Testis (tissue), 5 donors: ENCODE measurements at regions of chr2 and their contacts with region 1.

Region 1: GRCh38 chr2:85888684-85889626 is at the start of gene ST3GAL5:
- DNase-seq: peak; percentile 95
- H3K4me3 ChIP-seq: peak within 1 kb of the TSS; percentile 73 to 93
- H3K27ac ChIP-seq: peak within 1 kb of the TSS; percentile 53 to 92
- H3K4me1 ChIP-seq: peaks cover 31% of the 10 kb centered on the region
- H3K27me3 ChIP-seq: no peaks in the 10 kb centered on the region
- CTCF ChIP-seq: peak; percentile 65 to 84 (median 65)
- POLR2A ChIP-seq: no peak
- total RNA-seq, gene ST3GAL5: 38.3 to 60.0 TPM

Region 2: GRCh38 chr2:85741833-85742455 is 147.0 kb before region 1 on chr2:
- intact Hi-C with region 1: no loop called
- DNase-seq: no peak
- H3K4me3 ChIP-seq: no peak overlapping the region
- H3K27ac ChIP-seq: peak overlapping the region; percentile 34 to 70
- H3K4me1 ChIP-seq: peaks cover 45% of the 10 kb centered on the region
- H3K27me3 ChIP-seq: no peaks in the 10 kb centered on the region
- CTCF ChIP-seq: no peak
- POLR2A ChIP-seq: no peak

Region 3: GRCh38 chr2:85999061-85999831 is 110.3 kb after region 1 on chr2:
- intact Hi-C with region 1: loop called (anchors 5 kb)
- DNase-seq: no peak
- H3K4me3 ChIP-seq: no peak overlapping the region
- H3K27ac ChIP-seq: peak overlapping the region; percentile 60 to 89
- H3K4me1 ChIP-seq: peaks cover 40% of the 10 kb centered on the region
- H3K27me3 ChIP-seq: no peaks in the 10 kb centered on the region
- CTCF ChIP-seq: no peak
- POLR2A ChIP-seq: no peak

Region 4: DNA sequence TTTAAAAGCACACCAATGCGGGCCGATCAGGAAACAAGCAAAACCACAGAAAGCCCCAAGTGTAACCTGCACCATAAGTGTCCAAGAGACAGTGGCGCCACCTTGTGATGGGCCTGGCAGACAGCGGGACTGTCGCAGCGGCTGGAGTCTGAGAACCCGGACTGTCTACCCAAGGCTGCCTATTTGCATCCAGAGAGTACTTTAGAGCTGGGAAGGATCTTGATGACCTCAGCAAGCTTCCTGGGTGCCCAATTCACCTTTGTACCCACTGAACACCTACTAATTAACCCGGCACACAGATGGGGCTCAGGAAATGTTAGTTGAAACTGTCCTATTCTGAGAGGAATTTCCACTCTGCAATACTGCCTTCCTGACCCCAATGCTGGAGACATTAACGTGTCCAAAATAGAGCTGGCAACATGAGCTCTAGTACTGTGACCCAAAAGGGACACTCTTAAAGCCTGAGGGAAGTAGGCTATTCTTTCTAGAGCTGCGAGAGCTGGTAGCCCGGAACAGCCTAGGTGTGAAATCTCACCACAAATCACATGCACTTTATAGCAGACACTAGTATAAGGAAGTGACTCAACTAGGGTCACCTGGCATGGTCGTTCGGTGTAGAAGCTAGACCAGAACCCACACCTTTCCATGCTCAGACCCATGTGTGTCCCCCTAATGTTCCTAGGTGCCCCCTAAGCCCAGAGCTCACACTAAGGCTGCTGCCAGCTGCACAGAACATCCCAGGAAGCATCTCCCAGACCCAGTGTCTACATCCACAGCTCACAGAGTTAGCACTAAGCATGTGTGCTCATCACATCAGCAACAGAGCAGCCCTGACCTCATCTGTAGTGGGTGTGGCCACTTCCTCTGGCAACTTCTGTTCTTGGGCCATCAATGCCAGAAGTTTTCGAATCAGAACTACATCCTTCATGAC is 191.3 kb after region 1 on chr2:
- intact Hi-C with region 1: loop called (anchors 10 kb)
- DNase-seq: peak; percentile 90
- H3K4me3 ChIP-seq: no peak overlapping the region
- H3K27ac ChIP-seq: no peak overlapping the region
- H3K4me1 ChIP-seq: no peaks in the 10 kb centered on the region
- H3K27me3 ChIP-seq: no peaks in the 10 kb centered on the region
- CTCF ChIP-seq: peak; percentile 73 to 80 (median 75)
- POLR2A ChIP-seq: no peak